Posterior vena cava (tissue), 2 donors: ENCODE measurements at regions of chr22 and their contacts with region 1.

Region 1: GRCh38 chr22:40990430-40990829 is 39.3 kb downstream of the RBX1 start:
- DNase-seq: no peak

Region 2: DNA sequence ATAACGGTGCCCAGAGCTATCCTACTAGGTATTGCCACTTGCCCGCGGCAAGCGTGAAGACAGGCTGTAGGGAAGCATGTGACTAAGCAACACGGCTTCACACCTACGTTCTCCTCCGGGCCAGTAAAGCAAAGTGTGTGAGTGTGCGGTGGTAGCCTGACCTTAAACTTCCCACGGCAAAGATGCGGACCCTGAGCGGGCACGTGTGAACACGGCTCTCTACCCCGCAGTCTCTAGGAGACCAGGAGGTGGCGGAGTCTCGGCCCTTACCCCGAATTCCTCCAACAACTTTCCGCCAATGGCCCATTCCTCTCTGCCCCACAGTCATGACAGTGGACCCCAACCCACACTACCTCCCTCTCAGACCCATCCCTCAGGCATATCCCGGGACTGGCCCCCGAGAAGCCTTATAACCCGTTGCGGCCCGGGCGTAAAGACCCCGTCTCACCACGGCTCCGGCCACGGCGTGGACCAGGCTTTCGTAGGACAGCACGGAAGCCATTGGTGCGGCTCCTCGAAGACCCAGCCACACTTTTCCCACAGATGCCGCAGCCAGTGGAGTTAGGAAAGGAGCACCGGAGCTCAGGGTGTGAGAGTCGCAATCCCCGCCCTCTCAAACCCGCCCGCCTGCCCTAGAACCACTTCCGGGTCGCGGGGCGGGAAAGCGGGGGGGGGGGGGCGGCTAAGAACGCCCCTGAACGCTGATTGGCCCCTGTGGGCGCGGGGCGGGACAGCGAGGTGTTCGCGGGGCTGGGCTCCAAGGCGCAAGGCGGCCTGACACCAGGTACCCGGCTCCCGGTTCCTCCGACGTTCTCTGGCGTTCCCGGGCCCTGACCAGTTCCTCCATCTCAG is 171.5 kb before region 1 on chr22 and contains the start of gene SLC25A17:
- intact Hi-C with region 1: no loop called
- DNase-seq: peak; percentile 95
- total RNA-seq, gene SLC25A17: 11.7 to 13.4 TPM

Region 3: GRCh38 chr22:40965936-40966725 is 24.3 kb before region 1 on chr22:
- intact Hi-C with region 1: loop called in 1 of 2 experiments (anchors 1 kb)
- DNase-seq: peak; percentile 38

Region 4: GRCh38 chr22:41028841-41029240 is 38.4 kb after region 1 on chr22:
- intact Hi-C with region 1: loop called in 1 of 2 experiments (anchors 2 kb)
- DNase-seq: no peak